ENCODE measurements at regions of chr10 and their contacts with region 1.

Region 1: DNA sequence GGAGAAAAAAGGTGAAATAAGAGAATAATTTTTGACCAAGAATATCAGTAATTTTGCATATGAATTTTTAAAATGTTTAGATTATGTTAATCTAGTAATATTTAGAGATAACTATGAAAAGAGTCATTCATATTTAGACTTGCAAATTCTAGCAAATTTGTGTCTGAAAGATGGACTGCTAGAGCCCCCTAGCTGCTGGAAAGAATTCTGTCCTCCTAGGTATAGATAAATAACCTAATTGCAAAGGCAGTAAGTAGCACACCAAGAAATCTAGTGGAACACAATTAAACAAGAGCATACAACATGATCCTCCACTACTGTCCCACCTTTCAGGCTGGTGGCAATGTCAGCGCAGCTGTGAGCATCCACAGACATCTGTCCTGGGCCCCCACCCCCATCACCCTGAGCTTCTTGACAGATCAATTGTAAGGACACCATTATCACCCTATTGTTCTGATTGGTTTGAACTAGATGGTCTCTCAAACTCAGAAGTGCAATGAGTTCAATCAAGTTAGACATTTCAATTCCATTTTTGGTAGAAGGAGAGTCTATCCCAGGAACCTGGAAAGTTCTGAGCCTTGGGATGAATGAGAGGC is 15.0 kb upstream of the GFRA1 start:
- DNase-seq: peak; percentile 56 to 81 (median 72)
- H3K4me3 ChIP-seq: no peak overlapping the region
- H3K27ac ChIP-seq: no peak overlapping the region
- H3K4me1 ChIP-seq: no peaks in the 10 kb centered on the region
- H3K27me3 ChIP-seq: peaks cover 4 to 45% (median 25%) of the 10 kb centered on the region in 5 experiments

Region 2: DNA sequence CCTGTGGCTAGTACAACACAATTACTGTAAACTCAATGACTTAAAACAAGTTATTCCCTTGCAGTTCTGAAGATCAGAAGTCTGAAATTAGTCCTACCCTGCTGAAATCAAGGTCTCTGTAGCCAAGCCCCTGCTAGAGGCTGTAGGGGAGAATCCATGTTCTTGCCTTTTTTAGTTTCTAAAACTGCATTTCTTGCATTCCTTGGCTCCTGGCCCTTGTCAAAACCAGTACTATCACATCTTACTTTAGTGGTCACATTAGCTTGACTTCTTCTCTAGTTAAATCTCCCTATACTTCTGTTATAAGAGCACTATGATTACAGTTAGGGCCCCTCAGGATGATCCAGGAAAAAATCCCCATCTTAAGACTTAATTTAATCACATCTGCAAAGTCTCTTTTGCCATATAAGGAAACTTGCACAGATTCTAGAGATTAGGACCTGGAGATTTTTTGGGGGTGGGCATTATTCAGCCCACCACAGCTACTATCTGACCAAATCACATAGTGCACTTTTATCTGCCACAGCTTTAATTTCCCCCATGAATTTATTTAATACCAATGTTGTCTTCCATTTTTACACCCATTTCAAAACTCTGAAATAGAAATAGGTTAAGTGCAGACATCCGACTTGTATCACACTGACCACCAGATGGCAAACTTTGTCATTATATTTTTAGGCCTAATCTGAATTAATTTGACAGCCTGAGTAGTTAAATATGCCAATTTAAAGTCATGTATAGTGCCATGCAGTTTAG is 581.8 kb before region 1 on chr10:
- CTCF ChIA-PET with region 1: interaction called, 21 read pairs
- POLR2A ChIA-PET with region 1: no interaction called
- DNase-seq: peak; percentile 22 to 42 (median 41)
- H3K4me3 ChIP-seq: no peak overlapping the region
- H3K27ac ChIP-seq: no peak overlapping the region
- H3K4me1 ChIP-seq: no peaks in the 10 kb centered on the region
- H3K27me3 ChIP-seq: no peaks in the 10 kb centered on the region

Region 3: GRCh38 chr10:115801992-115802391 is 486.0 kb before region 1 on chr10:
- CTCF ChIA-PET with region 1: interaction called, 30 read pairs
- POLR2A ChIA-PET with region 1: no interaction called
- DNase-seq: no peak
- H3K4me3 ChIP-seq: no peak overlapping the region
- H3K27ac ChIP-seq: no peak overlapping the region
- H3K4me1 ChIP-seq: no peaks in the 10 kb centered on the region
- H3K27me3 ChIP-seq: peaks cover 2 to 8% (median 4%) of the 10 kb centered on the region in 5 experiments

Region 4: DNA sequence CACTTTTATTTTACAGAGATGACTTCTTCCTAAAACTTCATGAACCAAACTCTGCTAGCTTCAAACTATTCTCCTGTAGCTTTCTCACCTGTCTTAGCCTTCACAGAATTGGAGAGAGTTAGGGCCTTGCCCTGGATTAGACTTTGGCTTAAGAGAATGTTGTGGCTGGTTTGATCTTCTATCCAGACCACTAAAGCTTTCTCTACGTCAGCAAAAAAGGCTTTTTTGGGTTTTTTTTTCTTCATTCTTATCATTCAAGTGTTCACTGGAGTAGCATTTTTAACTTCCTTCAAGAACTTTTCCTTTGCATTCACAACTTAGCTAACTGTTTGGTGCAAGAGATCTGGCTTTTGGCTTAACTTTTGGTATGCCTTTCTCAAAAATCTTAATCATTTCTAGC is 16.9 kb after region 1 on chr10:
- CTCF ChIA-PET with region 1: no interaction called
- POLR2A ChIA-PET with region 1: no interaction called
- DNase-seq: no peak
- H3K4me3 ChIP-seq: no peak overlapping the region
- H3K27ac ChIP-seq: no peak overlapping the region
- H3K4me1 ChIP-seq: no peaks in the 10 kb centered on the region
- H3K27me3 ChIP-seq: peaks cover 0 to 2% (median 0%) of the 10 kb centered on the region in 5 experiments

Region 5: DNA sequence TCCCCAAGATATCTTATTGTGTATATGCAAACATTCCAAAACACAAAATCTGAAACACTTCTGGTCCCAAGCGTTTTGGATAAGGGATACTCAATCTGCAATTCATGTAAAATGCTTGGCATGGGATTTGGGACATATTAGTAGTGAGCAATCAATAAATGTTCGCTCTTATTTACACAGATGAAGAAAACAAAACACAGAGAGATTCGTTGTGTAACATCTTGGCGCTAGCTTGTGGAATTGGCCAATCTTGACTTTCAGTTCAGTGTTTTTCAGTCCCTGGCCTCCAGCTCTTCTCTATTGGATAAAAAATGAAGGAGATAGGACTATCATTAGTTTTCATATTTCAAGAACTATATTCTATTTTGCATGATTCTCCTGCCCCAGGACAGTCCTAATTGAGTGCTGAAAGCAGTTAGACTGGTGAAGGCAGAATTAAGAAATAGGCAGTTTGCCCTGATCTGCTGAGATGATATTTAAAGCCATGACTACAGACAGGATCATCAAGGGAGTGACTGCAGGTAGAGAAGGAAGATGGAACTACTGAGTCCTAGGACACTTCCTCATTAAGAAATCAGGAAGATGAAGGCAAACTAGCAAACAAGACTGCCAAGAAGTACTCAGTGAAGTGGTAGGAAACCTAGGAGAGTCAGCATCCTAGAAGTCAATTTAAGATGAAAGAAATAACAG is 141.4 kb after region 1 on chr10:
- CTCF ChIA-PET with region 1: no interaction called
- POLR2A ChIA-PET with region 1: no interaction called
- DNase-seq: no peak
- H3K4me3 ChIP-seq: no peak overlapping the region
- H3K27ac ChIP-seq: no peak overlapping the region
- H3K4me1 ChIP-seq: no peaks in the 10 kb centered on the region
- H3K27me3 ChIP-seq: peaks cover 0 to 3% (median 0%) of the 10 kb centered on the region in 5 experiments